ENCODE measurements at regions of chr17 and their contacts with region 1.

Region 1: DNA sequence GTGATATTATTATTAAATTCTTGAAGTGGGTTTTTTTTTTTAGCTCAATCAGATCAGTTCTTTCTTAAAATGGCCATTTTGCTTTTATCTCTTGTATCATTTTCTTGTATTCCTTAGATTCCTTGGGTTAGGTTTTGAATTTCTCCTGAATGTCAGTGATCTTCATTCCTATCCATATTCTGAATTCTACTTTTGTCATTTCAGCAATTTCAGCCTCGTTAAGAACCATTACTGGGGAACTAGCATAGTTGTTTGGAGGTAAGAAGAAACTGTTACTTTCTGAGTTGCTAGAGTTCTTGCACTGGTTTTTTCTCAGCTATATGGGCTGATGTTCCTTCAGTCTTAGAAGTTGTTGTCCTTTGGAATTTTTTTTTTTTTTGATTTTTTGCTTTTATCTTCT is 293.1 kb downstream of the MAP2K4 start:
- DNase-seq: no peak
- ATAC-seq: no peak
- H3K4me3 Mint-ChIP-seq: no peak overlapping the region
- H3K27ac Mint-ChIP-seq: no peak overlapping the region
- H3K4me1 Mint-ChIP-seq: no peaks in the 10 kb centered on the region
- H3K27me3 Mint-ChIP-seq: no peaks in the 10 kb centered on the region

Region 2: DNA sequence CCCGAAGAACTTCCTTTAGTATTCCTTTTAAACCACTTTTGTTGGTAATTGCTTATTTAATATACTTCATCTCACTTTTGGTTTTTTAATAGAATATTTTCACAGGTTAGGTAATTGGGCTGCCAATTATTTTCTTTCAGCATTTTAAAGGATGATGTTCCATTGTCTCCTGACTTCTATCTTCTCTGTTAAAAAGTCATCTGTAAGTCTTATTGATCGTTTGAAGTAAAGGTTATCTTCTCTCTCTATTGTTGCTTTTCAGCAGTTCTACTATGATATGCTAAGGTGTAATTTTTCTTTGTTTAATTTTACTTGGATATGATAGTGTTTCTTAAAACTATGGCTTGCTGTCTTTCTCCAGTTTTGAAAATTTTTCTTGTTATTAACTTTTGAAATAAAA is 14.4 kb after region 1 on chr17:
- CTCF ChIA-PET with region 1: no interaction called
- POLR2A ChIA-PET with region 1: no interaction called
- intact Hi-C with region 1: loop called in 1 of 2 experiments (anchors 1 kb)
- DNase-seq: no peak
- ATAC-seq: no peak
- H3K4me3 Mint-ChIP-seq: no peak overlapping the region
- H3K27ac Mint-ChIP-seq: no peak overlapping the region
- H3K4me1 Mint-ChIP-seq: no peaks in the 10 kb centered on the region
- H3K27me3 Mint-ChIP-seq: no peaks in the 10 kb centered on the region